ENCODE measurements at regions of chr4 and their contacts with region 1.

Region 1: GRCh38 chr4:56799824-56800756 is 21.4 kb downstream of the SPINK2 start:
- DNase-seq: peak; percentile 94
- H3K4me3 Mint-ChIP-seq: peak overlapping the region; percentile 95
- H3K27ac Mint-ChIP-seq: peak overlapping the region; percentile 73
- H3K4me1 Mint-ChIP-seq: peaks cover 12% of the 10 kb centered on the region
- H3K27me3 Mint-ChIP-seq: no peaks in the 10 kb centered on the region

Region 2: GRCh38 chr4:56342746-56343145 is 457.3 kb before region 1 on chr4:
- CTCF ChIA-PET with region 1: no interaction called
- intact Hi-C with region 1: no loop called
- DNase-seq: no peak
- H3K4me3 Mint-ChIP-seq: no peak overlapping the region
- H3K27ac Mint-ChIP-seq: no peak overlapping the region
- H3K4me1 Mint-ChIP-seq: no peaks in the 10 kb centered on the region
- H3K27me3 Mint-ChIP-seq: no peaks in the 10 kb centered on the region

Region 3: GRCh38 chr4:56424697-56425514 is 375.2 kb before region 1 on chr4:
- CTCF ChIA-PET with region 1: no interaction called
- intact Hi-C with region 1: loop called (anchors 1 kb)
- DNase-seq: peak; percentile 51
- H3K4me3 Mint-ChIP-seq: no peak overlapping the region
- H3K27ac Mint-ChIP-seq: no peak overlapping the region
- H3K4me1 Mint-ChIP-seq: peaks cover 23% of the 10 kb centered on the region
- H3K27me3 Mint-ChIP-seq: no peaks in the 10 kb centered on the region

Region 4: DNA sequence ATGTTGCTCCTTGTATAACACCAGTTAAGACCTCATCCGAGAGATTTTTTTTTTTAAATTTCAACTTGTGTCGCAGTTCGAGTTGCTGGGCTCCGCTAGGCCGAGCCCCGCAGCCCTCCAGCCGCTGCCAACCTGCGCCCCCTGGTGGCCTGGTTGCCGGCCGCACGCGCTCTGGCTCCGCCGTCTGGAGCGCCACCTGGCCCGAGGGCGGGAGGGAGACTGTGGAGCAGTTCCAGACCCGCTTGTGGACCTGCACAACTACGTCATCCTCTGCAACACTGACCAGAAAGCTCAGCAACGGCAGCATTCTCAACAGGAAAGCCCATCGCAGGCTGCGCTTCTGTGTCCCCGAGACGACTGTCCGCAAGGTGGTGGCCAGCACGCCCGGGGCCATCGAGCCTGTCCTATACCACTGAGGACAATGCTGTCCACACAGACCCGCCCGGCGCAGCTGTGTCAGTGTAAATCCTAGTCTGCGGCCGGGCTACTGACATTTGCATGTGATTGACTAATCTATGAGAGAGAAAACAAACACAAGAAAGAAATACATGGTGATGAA is 255.4 kb before region 1 on chr4:
- CTCF ChIA-PET with region 1: interaction called, 5 read pairs
- intact Hi-C with region 1: loop called (anchors 1 kb)
- DNase-seq: peak; percentile 86
- H3K4me3 Mint-ChIP-seq: peak overlapping the region; percentile 57
- H3K27ac Mint-ChIP-seq: no peak overlapping the region
- H3K4me1 Mint-ChIP-seq: peaks cover 14% of the 10 kb centered on the region
- H3K27me3 Mint-ChIP-seq: no peaks in the 10 kb centered on the region

Region 5: DNA sequence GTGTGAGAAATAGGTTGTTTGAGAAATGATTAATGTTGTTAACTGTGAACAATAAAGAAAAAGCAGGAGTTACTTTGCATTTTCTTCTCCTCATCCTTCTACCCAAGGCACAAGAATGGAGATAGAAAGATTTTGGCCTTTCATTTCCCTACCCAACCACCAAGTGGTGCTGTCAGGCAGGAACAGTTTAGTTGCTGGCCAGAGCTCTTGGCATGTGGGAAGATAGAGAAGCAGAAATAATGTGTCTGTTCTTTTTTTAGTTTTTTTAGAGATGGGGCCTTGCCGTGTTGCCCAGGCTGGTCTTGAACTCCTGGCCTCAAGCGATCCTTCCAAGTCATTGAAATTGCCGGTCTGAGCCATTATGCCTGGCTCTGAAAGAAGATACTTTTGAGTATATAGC is 131.8 kb before region 1 on chr4:
- CTCF ChIA-PET with region 1: interaction called, 5 read pairs
- intact Hi-C with region 1: loop called (anchors 1 kb)
- DNase-seq: peak; percentile 45
- H3K4me3 Mint-ChIP-seq: no peak overlapping the region
- H3K27ac Mint-ChIP-seq: no peak overlapping the region
- H3K4me1 Mint-ChIP-seq: no peaks in the 10 kb centered on the region
- H3K27me3 Mint-ChIP-seq: peaks cover 28% of the 10 kb centered on the region

Region 6: GRCh38 chr4:56723201-56723605 is 76.9 kb before region 1 on chr4:
- CTCF ChIA-PET with region 1: interaction called, 3 read pairs
- intact Hi-C with region 1: loop called (anchors 1 kb)
- DNase-seq: peak; percentile 79
- H3K4me3 Mint-ChIP-seq: no peak overlapping the region
- H3K27ac Mint-ChIP-seq: peak overlapping the region; percentile 69
- H3K4me1 Mint-ChIP-seq: peaks cover 15% of the 10 kb centered on the region
- H3K27me3 Mint-ChIP-seq: no peaks in the 10 kb centered on the region

Region 7: GRCh38 chr4:56821381-56822243 is 21.5 kb after region 1 on chr4 and contains the start of gene SPINK2:
- CTCF ChIA-PET with region 1: interaction called, 5 read pairs
- intact Hi-C with region 1: loop called (anchors 1 kb)
- DNase-seq: peak; percentile 75
- H3K4me3 Mint-ChIP-seq: peak within 1 kb of the TSS; percentile 74
- H3K27ac Mint-ChIP-seq: no peak within 1 kb of the TSS
- H3K4me1 Mint-ChIP-seq: peaks cover 25% of the 10 kb centered on the region
- H3K27me3 Mint-ChIP-seq: peaks cover 12% of the 10 kb centered on the region
- total RNA-seq, gene SPINK2: 0.83 to 1.4 TPM